Stomach (tissue), 19 donors: ENCODE measurements at regions of chr3 and their contacts with region 1.

Region 1: DNA sequence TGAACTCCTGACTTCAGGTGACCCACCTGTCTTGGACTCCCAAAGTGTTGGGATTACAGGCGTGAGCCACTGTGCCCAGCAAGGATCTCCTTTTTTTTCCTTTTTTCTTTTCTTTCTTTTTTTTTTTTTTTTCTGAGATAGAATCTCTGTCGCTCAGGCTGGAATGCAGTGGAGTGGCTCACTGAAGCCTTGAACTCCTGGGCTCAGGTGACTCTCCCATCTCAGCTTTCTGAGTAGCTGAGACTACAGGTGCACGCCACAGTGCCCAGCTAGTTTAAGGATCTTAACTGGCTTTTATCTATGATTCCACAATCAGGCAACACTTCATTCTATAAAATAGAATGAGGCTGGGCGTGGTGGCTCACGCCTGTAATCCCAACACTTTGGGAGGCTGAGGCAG is 16.3 kb upstream of the NICN1 start:
- DNase-seq: no peak
- H3K4me3 ChIP-seq: no peak overlapping the region
- H3K27ac ChIP-seq: peak overlapping the region in 1 of 5 donors; percentile 7
- H3K4me1 ChIP-seq: peaks cover 0 to 25% (median 3%) of the 10 kb centered on the region in 4 donors
- H3K27me3 ChIP-seq: no peaks in the 10 kb centered on the region
- CTCF ChIP-seq: no peak
- EP300 ChIP-seq: no peak
- POLR2A ChIP-seq: no peak

Region 2: GRCh38 chr3:49165771-49166751 is 279.3 kb before region 1 on chr3 and contains the start of gene CCDC71:
- intact Hi-C with region 1: loop called (anchors 10 kb)
- DNase-seq: peak; percentile 75 to 94
- H3K4me3 ChIP-seq: peak within 1 kb of the TSS; percentile 94 to 100 (median 99)
- H3K27ac ChIP-seq: peak within 1 kb of the TSS; percentile 57 to 95 (median 90)
- H3K4me1 ChIP-seq: peaks cover 24 to 55% (median 36%) of the 10 kb centered on the region in 4 donors
- H3K27me3 ChIP-seq: no peaks in the 10 kb centered on the region
- CTCF ChIP-seq: no peak
- EP300 ChIP-seq: no peak
- POLR2A ChIP-seq: no peak
- total RNA-seq, gene CCDC71: 2.3 to 22.6 (median 12.9) TPM

Region 3: DNA sequence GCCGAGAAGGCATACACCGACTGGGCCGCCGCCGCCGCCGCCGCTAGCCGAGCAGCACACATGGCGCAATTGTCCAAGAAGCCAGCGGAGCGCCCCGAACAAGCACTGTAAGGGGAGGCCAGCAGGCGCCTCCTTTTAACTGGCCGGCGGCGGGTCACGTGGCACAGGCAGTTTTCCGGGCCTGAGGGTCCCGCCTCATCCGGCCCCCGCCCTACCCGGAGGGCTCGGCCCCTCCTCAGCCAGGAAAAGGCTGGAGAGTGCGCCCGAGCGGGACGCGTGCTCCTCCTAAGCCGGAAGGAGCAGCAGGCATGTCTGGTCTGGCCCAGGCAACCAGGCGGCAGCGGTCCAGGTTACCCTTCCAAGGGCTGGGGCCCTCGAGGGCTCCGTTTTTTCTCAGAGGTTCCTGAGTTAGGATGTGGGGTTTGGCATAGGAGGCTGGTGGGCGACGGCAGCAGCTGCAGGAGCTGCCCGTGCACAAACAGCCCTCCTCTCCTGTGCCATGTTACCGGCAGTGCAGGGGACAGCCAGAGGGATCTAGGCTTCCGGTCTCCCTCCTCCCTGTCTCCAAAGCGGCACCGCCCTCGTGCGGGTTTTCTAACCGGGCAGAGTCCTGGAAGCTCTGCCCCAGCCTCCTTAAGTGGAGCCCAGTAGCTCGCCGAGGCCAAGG is 87.0 kb before region 1 on chr3 and contains the start of gene GPX1:
- intact Hi-C with region 1: loop called (anchors 10 kb)
- DNase-seq: peak; percentile 94 to 98
- H3K4me3 ChIP-seq: peak within 1 kb of the TSS; percentile 66 to 81 (median 73)
- H3K27ac ChIP-seq: peak within 1 kb of the TSS; percentile 88 to 98 (median 89)
- H3K4me1 ChIP-seq: peaks cover 20 to 45% (median 42%) of the 10 kb centered on the region in 4 donors
- H3K27me3 ChIP-seq: no peaks in the 10 kb centered on the region
- CTCF ChIP-seq: peak in 1 of 7 experiments; percentile 15
- EP300 ChIP-seq: no peak
- POLR2A ChIP-seq: peak in 2 of 4 donors; percentile 56 to 71
- total RNA-seq, gene GPX1: 58.4 to 350 (median 155) TPM